ENCODE measurements at regions of chr16 and their contacts with region 1.

Region 1: GRCh38 chr16:85659805-85660495 is 28.8 kb downstream of the GINS2 start:
- DNase-seq: peak; percentile 25 to 66 (median 43)
- H3K4me3 ChIP-seq: no peak overlapping the region
- H3K4me3 Mint-ChIP-seq: peak overlapping the region in 1 of 7 donors; percentile 5
- H3K27ac ChIP-seq: no peak overlapping the region
- H3K27ac Mint-ChIP-seq: peak overlapping the region in 6 of 8 donors; percentile 4 to 84 (median 77)
- H3K4me1 ChIP-seq: no peaks in the 10 kb centered on the region
- H3K4me1 Mint-ChIP-seq: peaks cover 0 to 4% (median 3%) of the 10 kb centered on the region in 3 donors
- H3K27me3 ChIP-seq: no peaks in the 10 kb centered on the region
- H3K27me3 Mint-ChIP-seq: no peaks in the 10 kb centered on the region

Region 2: DNA sequence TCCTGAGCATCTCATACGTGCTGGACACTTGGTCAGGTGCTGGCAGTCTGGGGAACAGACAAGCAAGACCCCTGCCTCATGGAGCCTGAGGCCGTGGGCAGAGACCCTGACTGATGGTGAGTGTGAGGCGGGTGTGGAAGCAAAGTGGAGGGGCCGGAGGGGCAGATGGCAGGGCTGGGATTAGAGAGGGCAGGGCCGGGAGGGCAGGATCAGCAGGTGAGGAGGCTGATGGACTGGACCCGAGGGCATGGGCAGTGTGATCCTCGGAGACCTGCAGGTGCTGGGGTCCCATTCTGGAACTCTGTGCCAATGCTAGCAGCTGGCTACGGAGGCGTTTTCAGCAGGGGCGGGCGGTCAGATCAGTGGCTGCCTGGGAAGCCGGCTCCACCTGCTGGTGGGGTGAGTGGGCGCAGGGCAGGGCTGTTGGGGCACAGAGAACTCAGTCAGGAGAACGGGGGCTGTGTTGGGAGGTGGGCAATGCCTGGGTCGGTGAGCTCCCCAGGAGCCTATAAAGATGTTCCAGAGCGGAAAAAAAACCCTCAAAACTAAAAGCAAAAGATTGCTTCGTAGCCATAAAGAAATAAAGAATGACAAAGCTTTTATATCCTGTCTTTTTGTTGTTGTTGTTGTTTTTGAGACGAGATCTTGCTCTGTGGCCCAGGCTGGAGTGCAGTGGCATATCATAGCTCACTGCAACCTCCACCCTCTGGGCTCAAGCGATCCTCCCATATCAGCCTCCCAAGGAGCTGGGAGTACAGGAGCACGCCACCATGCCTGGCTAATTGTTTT is 99.9 kb after region 1 on chr16:
- CTCF ChIA-PET with region 1: interaction called, 20 read pairs
- POLR2A ChIA-PET with region 1: no interaction called
- DNase-seq: peak in 2 of 5 donors; percentile 13 to 57
- H3K4me3 ChIP-seq: no peak overlapping the region
- H3K4me3 Mint-ChIP-seq: no peak overlapping the region
- H3K27ac ChIP-seq: no peak overlapping the region
- H3K27ac Mint-ChIP-seq: no peak overlapping the region
- H3K4me1 ChIP-seq: no peaks in the 10 kb centered on the region
- H3K4me1 Mint-ChIP-seq: peaks cover 4 to 20% (median 5%) of the 10 kb centered on the region in 3 donors
- H3K27me3 ChIP-seq: no peaks in the 10 kb centered on the region
- H3K27me3 Mint-ChIP-seq: peaks cover 17 to 38% of the 10 kb centered on the region in 2 donors

Measured in CD8-positive, alpha-beta memory T cell (primary cell).